ENCODE measurements at regions of chr18 and their contacts with region 1.

Region 1: DNA sequence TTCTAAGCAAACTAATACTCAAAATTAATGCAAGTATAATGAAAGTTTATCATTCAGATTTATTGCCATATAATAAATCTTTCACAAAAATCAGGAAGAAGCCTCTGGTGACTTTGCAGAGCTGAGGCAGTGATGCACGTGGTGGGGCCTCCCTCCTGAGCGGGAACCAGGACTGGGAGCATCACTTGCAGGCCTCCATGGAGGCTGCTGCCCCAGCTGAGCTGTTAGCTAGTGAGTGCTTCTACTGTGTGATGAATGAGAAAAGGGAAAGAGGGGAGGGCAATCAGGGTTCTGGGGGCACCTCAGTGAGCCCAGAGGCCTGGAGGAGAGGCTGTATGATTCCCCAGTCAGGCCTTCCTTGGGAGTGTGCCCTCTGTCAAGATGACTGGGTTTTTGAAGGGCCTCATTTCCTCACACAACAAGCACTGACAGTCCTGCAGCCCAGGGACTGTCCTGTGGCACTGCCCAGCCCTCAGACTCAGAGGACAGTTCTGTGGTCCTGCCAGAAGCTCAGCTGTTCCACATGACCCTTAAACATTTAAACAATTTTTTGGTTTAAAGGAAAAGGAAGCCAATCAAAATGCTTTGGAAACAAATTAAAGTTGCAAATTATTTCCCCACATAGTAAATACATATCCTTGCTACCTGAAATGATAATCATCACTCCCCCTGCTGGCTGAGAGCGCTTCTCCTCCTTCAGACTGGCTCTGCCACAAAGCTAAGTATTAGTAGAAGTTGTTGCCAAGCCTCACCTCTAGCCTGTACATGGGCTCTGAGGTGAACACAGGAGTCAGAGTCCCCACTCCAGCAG is 90.9 kb upstream of the SMAD7 start:
- DNase-seq: peak in 8 of 9 donors; percentile 16 to 53 (median 44)
- ATAC-seq: peak; percentile 74
- H3K4me3 ChIP-seq: no peak overlapping the region
- H3K4me3 Mint-ChIP-seq: no peak overlapping the region
- H3K27ac ChIP-seq: no peak overlapping the region
- H3K27ac Mint-ChIP-seq: peak overlapping the region in 1 of 9 donors; percentile 35
- H3K4me1 ChIP-seq: no peaks in the 10 kb centered on the region
- H3K4me1 Mint-ChIP-seq: peaks cover 0 to 10% (median 7%) of the 10 kb centered on the region in 7 donors
- H3K27me3 ChIP-seq: no peaks in the 10 kb centered on the region
- H3K27me3 Mint-ChIP-seq: no peaks in the 10 kb centered on the region

Region 2: DNA sequence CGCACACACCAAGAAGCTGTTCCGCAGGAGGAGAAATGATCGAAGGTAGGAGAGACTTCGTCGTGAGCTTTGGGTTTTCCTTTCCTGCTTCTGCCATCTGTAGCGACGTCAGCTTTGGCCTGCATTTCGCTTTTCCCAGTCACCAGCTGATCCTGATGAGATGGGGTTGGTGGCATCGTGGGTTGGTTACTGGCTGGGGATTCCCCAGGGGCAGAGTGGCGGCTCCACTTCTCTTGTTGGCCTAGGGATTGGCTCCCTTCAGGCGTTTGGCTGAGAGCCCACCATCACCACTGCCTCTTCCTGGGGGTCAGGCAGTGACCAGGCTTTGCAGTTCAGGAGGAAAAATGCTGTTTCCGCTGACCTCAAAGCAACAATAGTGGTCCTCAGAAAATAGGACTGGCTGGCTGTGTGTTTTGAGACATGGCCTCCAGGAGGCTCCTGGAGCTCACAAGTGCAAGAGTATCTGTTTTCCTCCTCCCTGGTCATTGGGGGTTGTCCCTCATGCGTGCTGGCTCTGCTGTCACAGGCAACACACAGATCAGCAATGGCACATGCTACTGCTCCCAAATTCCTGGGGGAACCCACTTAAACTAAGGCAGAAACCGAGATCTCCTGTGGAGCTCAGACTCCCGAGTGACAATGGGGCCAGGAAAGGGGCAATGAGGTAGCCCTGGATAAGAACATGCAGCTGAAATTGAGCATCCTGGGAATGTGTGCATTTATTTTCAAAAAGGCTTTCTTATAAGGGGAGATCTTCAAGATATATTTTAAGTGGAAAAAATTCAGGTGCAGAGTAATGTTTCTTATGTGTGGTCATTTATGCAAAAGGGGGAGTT is 329.8 kb before region 1 on chr18:
- CTCF ChIA-PET with region 1: no interaction called
- POLR2A ChIA-PET with region 1: no interaction called
- intact Hi-C with region 1: loop called in 1 of 2 experiments (anchors 2 kb)
- DNase-seq: peak in 5 of 9 donors; percentile 4 to 18 (median 8)
- ATAC-seq: no peak
- H3K4me3 ChIP-seq: no peak overlapping the region
- H3K4me3 Mint-ChIP-seq: no peak overlapping the region
- H3K27ac ChIP-seq: no peak overlapping the region
- H3K27ac Mint-ChIP-seq: no peak overlapping the region
- H3K4me1 ChIP-seq: no peaks in the 10 kb centered on the region
- H3K4me1 Mint-ChIP-seq: peaks cover 0 to 8% (median under 1%) of the 10 kb centered on the region in 7 donors
- H3K27me3 ChIP-seq: no peaks in the 10 kb centered on the region
- H3K27me3 Mint-ChIP-seq: peaks cover 0 to 6% (median 0%) of the 10 kb centered on the region in 5 donors

Region 3: DNA sequence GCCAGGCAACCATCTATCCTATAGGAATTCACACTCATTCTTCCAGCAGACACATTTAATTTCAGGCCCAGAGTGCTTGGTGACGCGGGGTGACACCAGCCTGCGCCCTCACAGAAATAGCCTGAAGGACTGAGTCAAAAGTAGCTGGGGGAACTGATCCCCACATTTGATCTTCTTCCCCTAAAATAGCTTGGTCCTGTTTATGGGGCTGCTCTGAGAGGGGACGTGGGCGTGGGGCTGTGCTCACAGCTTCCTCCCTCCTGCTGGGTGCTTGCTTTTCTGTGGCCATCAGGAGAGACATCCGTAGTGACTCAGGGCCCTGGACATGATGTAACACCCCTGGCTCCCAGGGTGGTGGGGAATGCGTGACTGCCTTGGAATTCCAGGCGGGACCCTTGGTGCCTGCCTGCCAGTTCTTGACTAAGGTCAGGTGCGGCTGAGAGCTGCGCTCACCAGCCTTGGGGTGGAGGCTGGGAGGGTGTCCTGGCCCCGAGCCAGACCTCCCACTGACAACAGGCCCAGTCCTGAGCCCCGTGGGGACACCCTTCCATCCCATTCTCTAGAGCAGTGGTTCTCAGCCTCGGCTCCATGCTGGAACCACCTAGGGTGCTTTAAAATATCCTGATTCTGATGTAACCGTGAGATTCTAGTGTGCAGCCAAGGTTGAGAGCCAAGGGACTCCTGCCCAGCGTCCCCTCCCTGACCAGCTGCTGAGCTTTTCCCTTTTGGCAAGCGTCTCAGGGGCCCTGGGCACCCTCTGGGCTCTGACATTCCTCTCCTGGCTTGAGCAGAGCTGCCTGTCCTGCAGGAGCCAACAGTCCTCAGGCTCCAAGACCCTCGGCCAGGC is 43.4 kb before region 1 on chr18:
- CTCF ChIA-PET with region 1: no interaction called
- POLR2A ChIA-PET with region 1: no interaction called
- intact Hi-C with region 1: no loop called
- DNase-seq: no peak
- ATAC-seq: peak; percentile 25
- H3K4me3 ChIP-seq: no peak overlapping the region
- H3K4me3 Mint-ChIP-seq: peak overlapping the region in 2 of 10 donors; percentile 3 to 59
- H3K27ac ChIP-seq: no peak overlapping the region
- H3K27ac Mint-ChIP-seq: peak overlapping the region in 6 of 9 donors; percentile 58 to 95 (median 89)
- H3K4me1 ChIP-seq: peaks cover 7 to 17% of the 10 kb centered on the region in 2 donors
- H3K4me1 Mint-ChIP-seq: peaks cover 9 to 26% (median 17%) of the 10 kb centered on the region in 7 donors
- H3K27me3 ChIP-seq: no peaks in the 10 kb centered on the region
- H3K27me3 Mint-ChIP-seq: peaks cover 0 to 12% (median 0%) of the 10 kb centered on the region in 5 donors

Region 4: DNA sequence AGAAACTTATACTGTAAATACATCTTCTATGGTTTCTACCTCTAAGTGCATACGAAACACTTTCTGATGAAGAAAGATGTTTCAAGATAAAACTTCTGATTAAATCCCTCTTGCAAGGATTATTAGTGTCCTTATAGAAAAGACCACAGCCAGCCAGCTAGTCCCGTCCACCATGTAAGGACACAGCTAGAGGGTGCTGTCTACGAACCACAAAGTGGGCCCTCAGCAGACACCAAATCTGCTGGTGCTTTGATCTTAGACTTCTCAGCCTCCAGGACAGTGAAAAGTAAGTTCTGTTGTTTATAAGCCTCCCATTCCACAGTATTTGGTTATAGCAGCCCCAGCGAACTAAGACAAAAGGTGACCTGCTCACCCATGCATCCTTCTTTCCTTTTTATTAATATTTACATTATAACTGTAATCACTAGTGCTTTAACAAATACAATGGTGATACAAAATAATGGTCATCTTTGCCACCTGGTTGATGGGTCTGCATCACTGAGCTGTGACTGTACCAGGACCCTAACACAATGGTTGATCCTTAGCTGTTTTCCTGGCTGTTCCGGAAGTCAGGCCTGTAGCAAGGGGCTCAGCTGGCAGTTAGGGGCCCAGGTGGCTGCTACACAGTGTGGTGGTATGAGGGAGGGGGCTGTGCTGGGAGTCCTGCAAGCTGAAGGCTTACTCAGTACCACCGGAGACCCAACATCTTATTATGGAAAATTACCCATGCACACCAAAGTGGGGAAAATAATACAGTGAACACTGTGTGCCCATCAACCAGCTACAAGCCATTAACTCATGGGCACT is 17.6 kb after region 1 on chr18:
- CTCF ChIA-PET with region 1: no interaction called
- POLR2A ChIA-PET with region 1: no interaction called
- intact Hi-C with region 1: no loop called
- DNase-seq: no peak
- ATAC-seq: no peak
- H3K4me3 ChIP-seq: no peak overlapping the region
- H3K4me3 Mint-ChIP-seq: no peak overlapping the region
- H3K27ac ChIP-seq: no peak overlapping the region
- H3K27ac Mint-ChIP-seq: no peak overlapping the region
- H3K4me1 ChIP-seq: no peaks in the 10 kb centered on the region
- H3K4me1 Mint-ChIP-seq: peaks cover 14 to 45% (median 29%) of the 10 kb centered on the region in 7 donors
- H3K27me3 ChIP-seq: no peaks in the 10 kb centered on the region
- H3K27me3 Mint-ChIP-seq: no peaks in the 10 kb centered on the region

Region 5: GRCh38 chr18:49486953-49487710 is 445.5 kb after region 1 on chr18 and contains the start of gene C18orf32:
- CTCF ChIA-PET with region 1: no interaction called
- POLR2A ChIA-PET with region 1: no interaction called
- intact Hi-C with region 1: no loop called
- DNase-seq: peak; percentile 84 to 93 (median 92)
- ATAC-seq: peak; percentile 94
- H3K4me3 ChIP-seq: peak within 1 kb of the TSS; percentile 95
- H3K4me3 Mint-ChIP-seq: peak within 1 kb of the TSS; percentile 77 to 98 (median 94)
- H3K27ac ChIP-seq: peak within 1 kb of the TSS; percentile 95
- H3K27ac Mint-ChIP-seq: peak within 1 kb of the TSS; percentile 90 to 98 (median 96)
- H3K4me1 ChIP-seq: peaks cover 34 to 39% of the 10 kb centered on the region in 2 donors
- H3K4me1 Mint-ChIP-seq: peaks cover 40 to 83% (median 70%) of the 10 kb centered on the region in 7 donors
- H3K27me3 ChIP-seq: no peaks in the 10 kb centered on the region
- H3K27me3 Mint-ChIP-seq: no peaks in the 10 kb centered on the region
- total RNA-seq, gene C18orf32: 22.5 to 53.6 (median 31.5) TPM

Measured in naive thymus-derived CD4-positive, alpha-beta T cell (primary cell).